Mammary epithelial cell (primary cell): ENCODE measurements at regions of chr1 and their contacts with region 1.

Region 1: DNA sequence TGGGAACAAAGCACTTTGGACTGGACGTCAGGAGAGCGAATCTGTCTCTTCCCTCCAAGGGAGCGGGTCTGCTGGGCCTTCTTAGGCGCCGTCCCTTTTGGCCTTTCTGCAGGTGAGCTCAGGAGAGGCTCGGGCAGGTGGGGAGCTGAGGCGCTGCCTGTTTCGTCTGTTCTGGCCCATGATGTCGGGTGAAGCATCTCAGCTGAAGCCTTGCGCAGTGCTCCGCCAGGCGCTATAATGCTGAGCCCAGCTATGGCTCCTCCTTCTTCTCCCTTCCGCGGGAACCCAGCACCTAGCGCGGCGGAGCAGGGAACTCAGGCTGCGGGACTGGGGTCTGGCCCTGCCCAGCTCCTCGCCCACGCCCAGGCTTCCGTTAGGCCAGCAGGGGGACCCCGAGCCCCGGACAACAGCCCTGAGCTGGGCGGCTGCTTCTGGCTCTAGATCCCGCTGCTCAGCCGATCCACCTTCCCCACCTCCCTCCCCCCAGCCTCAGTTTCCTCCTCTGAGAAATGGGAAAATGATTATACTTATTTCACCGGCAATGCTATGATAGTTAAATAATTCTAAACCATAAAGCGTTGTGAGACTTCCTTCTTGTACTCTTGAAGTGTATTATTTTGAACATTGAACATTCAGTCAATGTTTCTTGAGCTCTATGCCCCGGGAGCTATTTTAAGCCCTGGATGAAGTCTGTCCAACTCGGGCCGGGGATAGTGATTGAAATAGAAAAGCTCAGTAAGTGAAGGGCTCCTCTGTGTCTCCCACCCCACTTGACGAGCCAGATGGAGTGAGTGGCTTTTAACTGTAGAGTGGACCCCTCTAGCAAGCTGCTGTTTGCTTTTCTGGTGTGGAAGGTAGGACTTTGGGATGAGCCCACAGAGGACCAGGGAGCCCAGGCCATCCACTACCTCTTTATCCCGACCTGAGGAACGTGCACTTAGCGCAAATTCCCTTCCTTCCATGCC is 9.6 kb upstream of the ADORA1 start:
- DNase-seq: peak; percentile 43
- H3K4me3 ChIP-seq: no peak overlapping the region
- H3K27ac ChIP-seq: no peak overlapping the region
- H3K4me1 ChIP-seq: no peaks in the 10 kb centered on the region
- H3K27me3 ChIP-seq: peaks cover 13% of the 10 kb centered on the region
- CTCF ChIP-seq: peak; percentile 58 to 83

Region 2: DNA sequence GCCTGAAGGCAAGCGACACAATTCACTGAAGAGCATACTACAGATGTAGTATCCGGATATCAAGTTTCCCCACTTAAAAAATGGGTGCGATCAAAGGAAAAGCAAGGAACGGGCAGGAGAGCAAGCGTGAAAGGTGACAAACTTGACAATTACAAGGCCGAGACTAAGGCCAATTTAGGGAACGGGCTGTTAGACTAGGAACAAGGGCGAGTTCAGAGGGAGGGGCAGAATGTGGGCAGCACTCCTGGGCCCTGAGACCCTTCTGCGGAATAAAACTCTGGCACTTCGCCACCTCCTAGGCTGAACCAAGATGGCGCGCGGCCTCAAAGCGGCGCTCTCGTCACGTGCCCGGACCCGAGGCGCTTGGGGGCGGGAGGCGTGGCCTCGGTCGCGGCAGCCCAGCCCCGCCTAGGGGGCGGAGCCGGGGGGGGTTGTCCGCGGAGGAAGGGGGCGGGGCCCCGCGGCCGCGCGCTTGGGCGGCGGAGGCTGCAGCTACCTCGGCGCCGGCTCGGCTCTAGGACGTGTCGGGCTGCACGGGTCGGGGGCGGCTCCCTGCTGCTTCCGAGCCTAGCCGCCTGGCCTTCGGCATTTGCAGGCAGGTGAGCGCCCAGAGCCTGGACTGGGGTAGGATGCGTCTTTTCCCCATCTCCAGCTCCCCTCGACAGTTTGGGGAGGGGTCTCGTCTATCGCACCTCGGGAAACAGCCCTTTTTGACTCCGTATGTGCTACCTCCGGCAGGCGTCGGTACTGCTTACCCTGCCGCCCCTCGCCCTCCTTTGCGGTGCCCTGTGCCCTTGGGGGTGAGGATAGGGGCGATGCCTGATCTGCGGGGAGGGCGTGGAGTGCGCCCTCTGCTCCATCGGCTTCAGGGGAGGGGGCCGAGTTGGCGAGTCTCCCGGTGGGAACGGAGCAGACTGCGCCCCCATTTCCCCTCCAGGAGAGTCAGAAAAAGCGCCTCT is 91.6 kb before region 1 on chr1 and contains the start of gene PPFIA4:
- CTCF ChIA-PET with region 1: interaction called, 22 read pairs
- dilution Hi-C with region 1: no loop called
- in situ Hi-C with region 1: no loop called
- intact Hi-C with region 1: no loop called
- DNase-seq: peak; percentile 83
- H3K4me3 ChIP-seq: peak within 1 kb of the TSS; percentile 56 to 95 (median 89)
- H3K27ac ChIP-seq: peak within 1 kb of the TSS; percentile 12
- H3K4me1 ChIP-seq: peaks cover 8% of the 10 kb centered on the region
- H3K27me3 ChIP-seq: no peaks in the 10 kb centered on the region
- CTCF ChIP-seq: no peak
- total RNA-seq, gene PPFIA4: 8.2 to 8.3 TPM

Region 3: GRCh38 chr1:203065191-203065590 is 52.7 kb before region 1 on chr1:
- CTCF ChIA-PET with region 1: interaction called, 26 read pairs
- dilution Hi-C with region 1: no loop called
- in situ Hi-C with region 1: no loop called
- intact Hi-C with region 1: no loop called
- DNase-seq: no peak
- H3K4me3 ChIP-seq: no peak overlapping the region
- H3K27ac ChIP-seq: no peak overlapping the region
- H3K4me1 ChIP-seq: no peaks in the 10 kb centered on the region
- H3K27me3 ChIP-seq: no peaks in the 10 kb centered on the region
- CTCF ChIP-seq: no peak

Region 4: DNA sequence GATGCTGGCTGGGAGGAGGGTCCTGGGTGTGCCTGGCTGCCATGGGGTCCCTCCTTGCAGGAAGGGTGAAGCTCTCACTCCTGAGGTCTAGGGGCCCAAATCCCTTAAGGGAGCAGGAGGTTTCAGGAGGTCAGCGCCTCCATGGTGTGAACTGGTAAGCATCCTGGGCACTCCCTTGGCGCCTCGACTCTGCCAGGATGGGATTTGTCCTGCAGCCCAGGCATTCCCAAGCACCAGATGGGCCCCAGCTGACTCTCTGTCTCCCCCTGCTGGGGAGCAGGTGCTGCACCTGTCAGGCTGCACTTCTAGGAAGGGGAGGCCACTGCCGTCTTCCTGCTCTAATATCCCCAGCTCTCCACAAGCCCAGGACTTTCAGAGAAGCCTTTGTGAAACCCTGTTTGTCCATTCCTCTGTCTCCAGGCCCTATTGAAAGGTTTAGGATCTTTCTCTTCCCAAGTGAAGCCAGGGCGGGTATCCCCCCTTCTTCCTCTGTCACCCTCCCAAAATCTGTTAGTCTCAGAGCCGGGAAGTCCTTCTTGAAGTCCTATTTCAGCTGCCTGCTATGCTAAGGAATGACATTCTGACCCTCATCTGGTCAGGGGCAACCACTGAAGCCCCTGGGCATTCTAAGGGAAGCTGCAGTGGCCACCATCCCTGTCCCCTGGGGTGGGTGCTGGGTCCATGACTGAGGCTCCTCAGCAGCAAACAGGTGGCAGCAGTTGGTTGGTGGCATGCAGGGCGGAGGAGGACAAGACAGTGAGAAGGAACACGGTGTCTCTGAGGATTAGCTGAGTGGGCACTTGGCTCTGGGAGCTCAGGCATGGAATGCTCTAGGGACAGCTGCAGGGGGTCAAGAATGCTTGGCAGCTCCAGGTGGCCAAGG is 54.5 kb after region 1 on chr1:
- CTCF ChIA-PET with region 1: interaction called, 7 read pairs
- dilution Hi-C with region 1: no loop called
- in situ Hi-C with region 1: no loop called
- intact Hi-C with region 1: loop called (anchors 1 kb)
- DNase-seq: peak; percentile 40
- H3K4me3 ChIP-seq: no peak overlapping the region
- H3K27ac ChIP-seq: no peak overlapping the region
- H3K4me1 ChIP-seq: peaks cover 5% of the 10 kb centered on the region
- H3K27me3 ChIP-seq: no peaks in the 10 kb centered on the region
- CTCF ChIP-seq: peak; percentile 97 to 98

Region 5: GRCh38 chr1:203267347-203267846 is 149.5 kb after region 1 on chr1:
- CTCF ChIA-PET with region 1: interaction called, 27 read pairs
- dilution Hi-C with region 1: no loop called
- in situ Hi-C with region 1: no loop called
- intact Hi-C with region 1: loop called (anchors 1 kb)
- DNase-seq: peak; percentile 78
- H3K4me3 ChIP-seq: peak overlapping the region; percentile 12 to 52 (median 52)
- H3K27ac ChIP-seq: peak overlapping the region; percentile 1
- H3K4me1 ChIP-seq: peaks cover 2% of the 10 kb centered on the region
- H3K27me3 ChIP-seq: no peaks in the 10 kb centered on the region
- CTCF ChIP-seq: peak; percentile 92 to 94

Region 6: DNA sequence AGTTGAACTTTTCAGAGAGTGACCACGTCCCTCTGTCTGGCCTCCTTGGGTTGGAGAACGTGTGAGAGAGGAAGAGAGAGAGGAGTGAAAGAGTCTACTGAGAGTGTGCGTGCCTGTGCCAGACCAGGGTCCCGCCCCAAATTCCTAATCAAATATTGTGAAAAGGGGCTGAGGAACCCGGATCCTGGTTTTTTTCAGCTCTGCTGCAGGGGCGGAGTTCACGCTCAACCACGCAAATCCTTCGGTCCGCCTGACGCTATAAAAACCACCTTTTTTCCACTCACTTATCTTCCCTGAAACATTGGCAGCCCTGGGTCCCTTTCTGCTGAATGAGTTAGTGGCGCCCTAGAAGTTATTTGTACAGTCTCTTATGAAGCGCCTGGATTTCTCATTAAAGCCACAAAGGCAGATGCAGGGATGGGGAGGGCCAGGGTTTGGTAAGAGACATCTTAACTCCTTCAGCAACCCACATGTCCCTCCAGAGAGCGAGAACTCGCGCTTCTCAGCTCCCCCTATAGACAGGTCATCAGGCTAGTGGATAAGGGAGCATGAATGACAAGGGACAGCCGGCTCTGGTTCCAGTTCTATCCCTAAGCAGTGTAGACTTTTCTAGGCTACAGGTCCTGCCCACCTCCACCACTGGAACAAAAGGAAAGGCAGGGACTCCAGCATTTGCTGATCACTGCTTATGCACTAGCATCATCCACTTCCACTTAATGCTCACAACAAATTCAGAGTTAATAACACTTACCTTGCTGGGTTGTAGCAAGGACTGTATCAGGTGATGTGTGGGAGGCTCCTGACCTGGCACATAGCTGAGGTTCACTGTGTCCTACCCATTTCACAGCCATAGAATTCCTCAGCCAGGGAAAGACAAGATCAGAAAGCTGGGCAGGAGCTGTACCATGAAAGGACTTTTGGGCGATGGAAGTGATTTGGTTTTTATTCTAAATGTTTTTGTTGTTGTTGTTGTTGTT is 233.4 kb after region 1 on chr1 and contains the start of gene FMOD:
- CTCF ChIA-PET with region 1: no interaction called
- dilution Hi-C with region 1: no loop called
- in situ Hi-C with region 1: no loop called
- intact Hi-C with region 1: no loop called
- DNase-seq: no peak
- H3K4me3 ChIP-seq: no peak within 1 kb of the TSS
- H3K27ac ChIP-seq: no peak within 1 kb of the TSS
- H3K4me1 ChIP-seq: no peaks in the 10 kb centered on the region
- H3K27me3 ChIP-seq: no peaks in the 10 kb centered on the region
- CTCF ChIP-seq: no peak
- total RNA-seq, gene FMOD: 1.5 TPM in 1 of 2 donors, not detected in the other